PC-9 (cell line): ENCODE measurements at regions of chr2 and their contacts with region 1.

Region 1: GRCh38 chr2:217804786-217805667 is 197.8 kb downstream of the TNS1 start:
- DNase-seq: no peak
- H3K4me3 ChIP-seq: no peak overlapping the region
- H3K27ac ChIP-seq: no peak overlapping the region
- H3K4me1 ChIP-seq: no peaks in the 10 kb centered on the region
- H3K27me3 ChIP-seq: no peaks in the 10 kb centered on the region
- CTCF ChIP-seq: no peak

Region 2: DNA sequence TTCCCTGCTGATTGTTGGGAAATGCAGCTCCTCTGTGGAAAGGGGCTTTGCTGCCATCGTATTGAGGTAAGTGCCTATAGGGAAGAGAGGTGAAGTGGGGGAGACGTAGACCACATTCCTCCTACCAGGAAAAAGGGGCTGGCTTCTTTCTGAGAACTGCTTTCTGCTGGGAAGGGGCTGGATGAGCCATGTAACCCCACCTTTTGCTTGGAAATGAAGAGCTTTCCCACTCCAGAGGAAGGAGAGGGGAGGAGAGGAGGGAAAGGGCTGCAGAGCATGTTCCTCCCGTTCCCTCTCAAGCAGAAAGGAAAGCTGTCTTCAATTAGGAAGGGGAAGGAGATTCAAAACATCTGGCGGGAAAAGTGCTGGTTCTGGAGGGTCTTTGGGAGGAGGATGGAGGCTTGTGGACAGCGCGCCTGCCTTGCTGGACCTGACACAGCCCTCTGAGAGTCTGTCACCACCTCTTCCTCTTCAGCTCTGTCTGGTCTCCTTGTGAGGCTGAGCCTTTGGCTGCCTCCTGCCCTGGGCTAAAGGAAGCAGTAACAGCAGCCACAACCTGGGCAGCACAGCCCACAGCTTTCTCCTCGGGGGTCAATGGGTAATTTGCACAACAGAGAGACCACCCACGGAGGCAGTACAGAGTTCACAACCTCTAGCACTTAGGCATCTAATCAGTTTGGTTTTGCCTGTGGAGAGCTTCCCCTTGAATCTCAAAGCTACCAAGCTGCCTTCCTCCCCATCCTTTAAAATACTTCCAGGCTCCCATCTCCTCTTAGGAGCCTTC is 535.1 kb before region 1 on chr2:
- CTCF ChIA-PET with region 1: no interaction called
- POLR2A ChIA-PET with region 1: no interaction called
- intact Hi-C with region 1: no loop called
- DNase-seq: no peak
- H3K4me3 ChIP-seq: no peak overlapping the region
- H3K27ac ChIP-seq: no peak overlapping the region
- H3K4me1 ChIP-seq: peaks cover 8% of the 10 kb centered on the region
- H3K27me3 ChIP-seq: no peaks in the 10 kb centered on the region
- CTCF ChIP-seq: no peak

Region 3: DNA sequence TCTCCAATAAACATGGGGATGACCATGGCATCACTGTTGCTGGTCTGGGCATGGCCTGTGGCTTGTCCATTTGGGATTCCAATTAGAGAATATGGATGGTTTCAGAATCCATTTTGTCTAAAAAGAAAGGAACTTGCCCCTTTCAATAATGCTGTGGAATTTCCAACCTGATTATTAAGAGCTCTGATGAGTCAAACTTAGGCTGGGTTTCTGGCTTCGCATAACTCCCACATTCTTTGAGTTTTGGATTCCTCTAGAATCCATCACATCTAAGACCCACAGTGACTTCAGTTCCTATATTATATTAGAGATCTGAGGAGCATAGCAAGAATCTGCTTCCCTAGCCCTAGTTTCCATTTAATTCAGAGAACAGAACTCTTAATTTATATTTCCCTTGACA is 333.7 kb before region 1 on chr2:
- CTCF ChIA-PET with region 1: no interaction called
- POLR2A ChIA-PET with region 1: no interaction called
- intact Hi-C with region 1: no loop called
- DNase-seq: no peak
- H3K4me3 ChIP-seq: no peak overlapping the region
- H3K27ac ChIP-seq: no peak overlapping the region
- H3K4me1 ChIP-seq: no peaks in the 10 kb centered on the region
- H3K27me3 ChIP-seq: no peaks in the 10 kb centered on the region
- CTCF ChIP-seq: no peak

Region 4: GRCh38 chr2:217784996-217785543 is 20.0 kb before region 1 on chr2:
- CTCF ChIA-PET with region 1: no interaction called
- POLR2A ChIA-PET with region 1: no interaction called
- intact Hi-C with region 1: no loop called
- DNase-seq: no peak
- H3K4me3 ChIP-seq: no peak overlapping the region
- H3K27ac ChIP-seq: no peak overlapping the region
- H3K4me1 ChIP-seq: no peaks in the 10 kb centered on the region
- H3K27me3 ChIP-seq: no peaks in the 10 kb centered on the region; the same call in 1 of the 2 replicates
- CTCF ChIP-seq: no peak

Region 5: DNA sequence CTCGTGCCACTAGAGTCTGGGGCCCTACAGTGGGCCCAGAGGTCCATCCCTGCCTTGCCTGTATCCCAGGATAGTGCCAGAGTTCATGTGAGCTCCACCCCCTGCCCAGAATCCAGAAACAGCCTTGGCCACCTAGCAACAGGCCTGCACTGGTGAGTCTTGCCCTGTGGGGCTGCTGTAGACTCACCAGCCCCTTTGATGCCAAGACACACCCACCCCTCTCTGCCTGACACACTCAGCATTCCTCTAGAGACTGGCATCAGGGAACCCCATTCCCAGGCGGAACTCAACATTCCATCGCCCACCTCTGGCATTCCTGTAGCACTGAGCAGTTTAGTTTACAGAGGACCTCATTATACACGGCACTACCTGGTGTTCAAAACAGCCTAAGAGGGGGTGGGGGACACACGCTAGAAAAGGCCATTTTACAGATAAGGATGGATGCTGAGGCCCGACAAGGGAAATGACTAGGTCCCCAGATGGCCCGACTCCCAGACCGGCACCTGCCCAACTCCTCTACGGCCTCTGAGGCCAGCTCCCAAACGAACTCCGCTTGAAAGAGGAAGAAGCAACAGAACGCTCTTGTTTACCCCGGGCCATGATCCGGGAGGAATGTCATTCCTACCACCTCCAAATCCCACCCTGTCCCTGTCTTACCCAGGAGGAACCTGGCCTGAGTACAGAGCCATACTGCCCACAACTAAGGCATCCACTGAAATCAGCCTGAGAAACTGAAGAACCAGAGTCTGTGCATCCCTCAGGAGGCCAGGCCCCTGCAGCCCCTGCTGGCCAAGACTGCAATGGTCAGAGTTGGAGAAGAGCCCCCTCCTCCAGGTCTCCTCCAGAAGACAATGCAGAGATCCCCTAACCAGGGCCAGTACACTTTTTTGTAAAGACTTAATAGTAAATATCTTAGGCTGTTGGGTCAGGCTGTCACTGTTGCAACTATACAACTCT is 17.5 kb after region 1 on chr2:
- CTCF ChIA-PET with region 1: no interaction called
- POLR2A ChIA-PET with region 1: interaction called, 15 read pairs
- intact Hi-C with region 1: no loop called
- DNase-seq: peak in 1 of 2 experiments; percentile 13
- H3K4me3 ChIP-seq: no peak overlapping the region
- H3K27ac ChIP-seq: no peak overlapping the region
- H3K4me1 ChIP-seq: no peaks in the 10 kb centered on the region
- H3K27me3 ChIP-seq: peaks cover 18% of the 10 kb centered on the region; the same call in 1 of the 2 replicates
- CTCF ChIP-seq: no peak